Heart left ventricle (tissue), 16 donors: ENCODE measurements at regions of chr17 and their contacts with region 1.

Region 1: GRCh38 chr17:6413065-6413464 is 21.9 kb downstream of the AIPL1 start:
- DNase-seq: no peak
- ATAC-seq: peak in 1 of 4 donors; percentile 37
- H3K4me3 ChIP-seq: no peak overlapping the region
- H3K27ac ChIP-seq: no peak overlapping the region
- H3K4me1 ChIP-seq: no peaks in the 10 kb centered on the region
- H3K27me3 ChIP-seq: peaks cover 0 to 8% (median 0%) of the 10 kb centered on the region in 9 donors
- CTCF ChIP-seq: peak in 10 of 12 donors; percentile 9 to 51 (median 32)
- POLR2A ChIP-seq: no peak

Region 2: DNA sequence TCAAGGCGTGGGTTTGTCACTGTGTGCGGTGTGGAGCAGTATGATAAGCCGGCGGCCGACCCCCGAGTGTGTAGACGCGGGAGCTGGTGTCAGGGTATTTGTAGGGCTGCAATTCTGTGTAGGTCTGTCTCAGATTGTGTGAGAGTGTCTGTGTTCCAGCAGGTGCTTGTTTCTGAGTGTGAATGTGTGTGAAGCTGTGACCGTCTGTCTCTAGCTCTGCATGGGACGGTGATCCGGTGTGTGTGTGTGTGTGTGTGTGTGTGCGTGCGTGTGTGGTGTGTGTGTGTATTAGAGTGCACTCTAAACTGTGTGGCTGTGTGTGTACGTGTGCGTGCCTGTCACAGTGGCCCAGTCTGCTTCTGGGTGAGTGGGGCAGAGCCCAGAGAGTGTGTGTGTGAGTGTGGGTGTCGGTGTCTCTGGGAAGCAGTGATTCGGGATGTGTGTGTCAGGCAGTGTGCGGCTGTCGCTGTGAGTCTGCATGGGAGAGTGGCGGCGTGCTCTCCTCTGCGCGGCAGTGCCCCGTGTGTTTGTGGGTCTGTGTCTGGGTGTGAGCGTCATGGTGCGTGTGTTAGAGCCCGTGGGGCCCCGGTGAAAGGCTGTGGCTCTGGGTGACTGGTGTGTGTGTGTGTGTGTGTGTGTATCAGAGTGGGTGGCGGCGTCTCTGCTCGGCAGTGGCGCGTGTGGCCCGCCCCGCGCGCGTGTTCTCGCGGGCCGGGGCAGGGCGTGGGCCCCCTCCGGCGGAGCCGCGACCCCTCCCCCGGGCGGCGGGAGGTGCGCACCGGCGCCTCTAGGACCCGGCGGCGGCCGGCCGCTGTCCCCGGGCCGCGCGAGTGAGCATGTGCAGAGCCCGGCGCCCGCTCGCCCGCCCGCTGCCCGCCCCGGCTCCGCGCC is 343.3 kb before region 1 on chr17 and contains the start of gene WSCD1:
- intact Hi-C with region 1: loop called in 1 of 10 experiments (anchors 10 kb)
- DNase-seq: peak in 1 of 5 donors; percentile 39
- ATAC-seq: peak; percentile 20 to 74 (median 64)
- H3K4me3 ChIP-seq: peak within 1 kb of the TSS; percentile 42 to 88 (median 64)
- H3K27ac ChIP-seq: peak within 1 kb of the TSS in 4 of 12 donors; percentile 10 to 67 (median 49)
- H3K4me1 ChIP-seq: peaks cover 0 to 20% (median 0%) of the 10 kb centered on the region in 12 donors
- H3K27me3 ChIP-seq: peaks cover 0 to 41% (median 3%) of the 10 kb centered on the region in 9 donors
- CTCF ChIP-seq: no peak
- POLR2A ChIP-seq: no peak
- total RNA-seq, gene WSCD1: 3.6 to 12.4 (median 5.3) TPM

Region 3: GRCh38 chr17:6279659-6280058 is 133.4 kb before region 1 on chr17:
- intact Hi-C with region 1: loop called in 1 of 10 experiments (anchors 10 kb)
- DNase-seq: no peak
- ATAC-seq: no peak
- H3K4me3 ChIP-seq: no peak overlapping the region
- H3K27ac ChIP-seq: no peak overlapping the region
- H3K4me1 ChIP-seq: no peaks in the 10 kb centered on the region
- H3K27me3 ChIP-seq: peaks cover 0 to 6% (median 0%) of the 10 kb centered on the region in 9 donors
- CTCF ChIP-seq: no peak
- POLR2A ChIP-seq: no peak

Region 4: DNA sequence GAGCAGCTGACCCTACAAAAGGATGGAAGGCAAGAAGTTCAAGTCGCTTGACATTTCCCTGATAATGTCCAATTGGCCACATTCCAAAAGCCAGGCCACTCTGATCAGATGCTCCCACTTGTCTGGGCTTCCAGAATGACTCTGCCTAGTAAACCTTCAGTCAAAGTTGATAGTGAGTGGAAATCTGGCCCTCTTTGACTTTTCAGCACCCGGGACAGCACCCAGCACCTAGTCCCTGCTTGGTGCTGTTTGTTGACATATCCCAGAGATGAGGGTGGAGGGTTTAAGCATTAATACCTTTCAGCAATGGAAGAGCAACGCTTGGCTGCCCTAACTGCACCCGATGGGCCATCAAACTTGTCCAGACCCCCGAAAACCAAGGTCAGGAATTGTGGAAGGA is 109.4 kb before region 1 on chr17:
- intact Hi-C with region 1: no loop called
- DNase-seq: peak in 1 of 5 donors; percentile 36
- ATAC-seq: no peak
- H3K4me3 ChIP-seq: no peak overlapping the region
- H3K27ac ChIP-seq: no peak overlapping the region
- H3K4me1 ChIP-seq: no peaks in the 10 kb centered on the region
- H3K27me3 ChIP-seq: peaks cover 0 to 4% (median 0%) of the 10 kb centered on the region in 9 donors
- CTCF ChIP-seq: no peak
- POLR2A ChIP-seq: no peak

Region 5: DNA sequence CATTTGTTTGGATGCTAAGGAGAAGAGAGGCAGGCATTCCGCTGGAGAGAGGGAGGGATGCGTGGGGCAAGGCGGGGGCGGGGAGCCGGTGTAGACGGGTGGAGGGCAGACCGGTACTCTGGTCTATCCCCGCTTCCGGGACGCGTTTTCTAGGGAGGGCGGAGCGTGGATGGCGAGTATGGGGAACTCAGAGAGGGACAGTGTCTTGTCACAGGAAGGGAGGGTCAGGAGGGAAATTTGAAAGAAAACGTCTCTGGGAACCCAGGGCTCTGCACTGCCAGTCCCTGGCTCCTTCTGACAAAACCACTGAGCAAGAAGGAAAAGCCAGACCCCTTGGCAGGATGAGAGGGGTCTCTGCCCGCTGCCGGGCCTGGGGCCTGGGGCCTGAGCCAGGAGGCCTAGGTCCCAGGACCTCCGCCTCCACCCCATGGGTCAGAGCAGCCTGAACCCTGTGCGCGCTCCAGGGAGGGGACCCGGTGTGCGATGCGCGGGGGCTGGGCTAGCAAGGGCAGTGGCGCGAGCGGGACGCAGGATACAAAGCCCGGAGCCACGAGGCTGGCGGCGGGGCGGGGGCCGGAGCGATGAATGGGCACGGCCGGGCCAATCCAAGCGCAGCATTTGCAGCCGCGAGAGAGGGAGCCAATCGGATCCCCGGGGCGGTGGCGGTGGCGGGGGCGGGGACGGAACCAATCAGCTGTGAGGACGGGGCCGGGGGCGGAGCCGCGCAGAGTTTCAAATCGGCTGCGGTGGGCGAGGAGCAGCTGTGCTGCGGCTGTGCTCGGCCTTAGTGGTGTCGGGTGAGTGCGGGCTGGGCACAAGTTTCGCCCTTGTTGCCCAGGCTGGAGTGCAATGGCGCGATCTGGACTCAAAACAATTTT is 30.9 kb after region 1 on chr17 and contains the start of gene PIMREG:
- intact Hi-C with region 1: no loop called
- DNase-seq: peak; percentile 94 to 97 (median 95)
- ATAC-seq: peak; percentile 97 to 100 (median 99)
- H3K4me3 ChIP-seq: peak within 1 kb of the TSS; percentile 24 to 72 (median 55)
- H3K27ac ChIP-seq: peak within 1 kb of the TSS in 3 of 12 donors; percentile 35 to 62 (median 49)
- H3K4me1 ChIP-seq: peaks cover 0 to 17% (median 6%) of the 10 kb centered on the region in 12 donors
- H3K27me3 ChIP-seq: peaks cover 0 to 16% (median 5%) of the 10 kb centered on the region in 9 donors
- CTCF ChIP-seq: no peak
- POLR2A ChIP-seq: no peak
- total RNA-seq, gene PIMREG: 0.35 to 4.6 (median 0.75) TPM in 5 of 9 donors, not detected in the others